Activated naive CD4-positive, alpha-beta T cell treated with anti-CD3 and anti-CD28 coated beads for 36 hours (primary cell): ENCODE measurements at regions of chr2 and their contacts with region 1.

Region 1: DNA sequence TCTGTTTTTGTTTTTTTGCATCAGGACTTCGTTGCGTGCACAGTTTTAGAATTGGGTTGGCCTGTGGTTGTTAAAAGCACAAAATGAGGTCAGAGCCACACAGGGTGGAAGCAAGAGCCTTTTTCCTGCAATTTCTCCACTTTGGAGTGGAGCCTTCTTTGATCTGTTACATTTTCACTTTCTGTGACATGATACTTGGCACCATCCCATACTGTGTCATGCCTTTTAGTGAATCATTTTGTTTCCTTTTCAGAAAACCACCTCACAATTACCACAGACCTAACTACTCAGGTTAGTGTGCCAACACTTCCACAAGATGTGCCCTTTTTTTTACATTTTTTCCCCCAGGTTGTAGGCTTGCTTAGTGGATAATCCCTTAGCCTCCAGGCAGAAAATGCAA is 32.5 kb downstream of the MERTK start:
- DNase-seq: peak; percentile 62
- H3K4me3 Mint-ChIP-seq: no peak overlapping the region
- H3K27ac Mint-ChIP-seq: peak overlapping the region; percentile 3
- H3K4me1 Mint-ChIP-seq: peaks cover 15% of the 10 kb centered on the region
- H3K27me3 Mint-ChIP-seq: no peaks in the 10 kb centered on the region

Region 2: GRCh38 chr2:110182449-110182848 is 1748.4 kb before region 1 on chr2:
- CTCF ChIA-PET with region 1: no interaction called
- intact Hi-C with region 1: no loop called
- DNase-seq: no peak
- H3K4me3 Mint-ChIP-seq: no peak overlapping the region
- H3K27ac Mint-ChIP-seq: no peak overlapping the region
- H3K4me1 Mint-ChIP-seq: no peaks in the 10 kb centered on the region
- H3K27me3 Mint-ChIP-seq: peaks cover 14% of the 10 kb centered on the region

Region 3: GRCh38 chr2:111905990-111906735 is 24.7 kb before region 1 on chr2:
- CTCF ChIA-PET with region 1: no interaction called
- intact Hi-C with region 1: loop called (anchors 2 kb)
- DNase-seq: peak; percentile 17
- H3K4me3 Mint-ChIP-seq: no peak overlapping the region
- H3K27ac Mint-ChIP-seq: no peak overlapping the region
- H3K4me1 Mint-ChIP-seq: peaks cover 15% of the 10 kb centered on the region
- H3K27me3 Mint-ChIP-seq: no peaks in the 10 kb centered on the region

Region 4: GRCh38 chr2:111982822-111983221 is 51.9 kb after region 1 on chr2:
- CTCF ChIA-PET with region 1: no interaction called
- intact Hi-C with region 1: loop called (anchors 2 kb)
- DNase-seq: peak; percentile 47
- H3K4me3 Mint-ChIP-seq: no peak overlapping the region
- H3K27ac Mint-ChIP-seq: peak overlapping the region; percentile 26
- H3K4me1 Mint-ChIP-seq: peaks cover 13% of the 10 kb centered on the region
- H3K27me3 Mint-ChIP-seq: no peaks in the 10 kb centered on the region